Dorsolateral prefrontal cortex (tissue), 120 donors: ENCODE measurements at regions of chr1 and their contacts with region 1.

Region 1: DNA sequence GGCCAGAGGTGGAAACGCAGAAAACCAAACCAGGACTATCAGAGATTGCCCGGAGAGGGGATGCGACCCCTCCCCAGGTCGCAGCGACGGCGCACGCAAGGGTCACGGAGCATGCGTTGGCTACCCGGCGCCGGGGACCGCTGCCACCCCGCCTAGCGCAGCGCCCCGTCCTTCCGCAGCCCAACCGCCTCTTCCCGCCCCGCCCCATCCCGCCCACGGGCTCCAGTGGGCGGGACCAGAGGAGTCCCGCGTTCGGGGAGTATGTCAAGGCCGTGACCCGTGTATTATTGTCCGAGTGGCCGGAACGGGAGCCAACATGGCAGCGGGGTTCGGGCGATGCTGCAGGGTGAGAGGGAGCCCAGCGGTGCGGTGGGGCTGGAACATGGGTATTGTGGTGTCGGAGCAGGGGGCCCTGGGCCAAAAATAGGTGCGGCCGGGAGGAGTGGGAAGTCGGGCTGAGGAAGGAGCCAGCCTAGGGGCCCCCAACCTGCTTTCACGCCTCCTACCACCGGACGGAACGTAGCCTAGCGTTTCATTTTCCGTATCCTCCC is at the start of gene ACADM:
- DNase-seq: peak; percentile 76 to 93 (median 86)
- H3K4me3 ChIP-seq: peak within 1 kb of the TSS; percentile 58 to 97 (median 86)
- H3K27ac ChIP-seq: peak within 1 kb of the TSS; percentile 24 to 97 (median 92)
- H3K27me3 ChIP-seq: no peaks in the 10 kb centered on the region
- CTCF ChIP-seq: peak in 9 of 56 donors; percentile 5 to 35 (median 13)
- total RNA-seq, gene ACADM: 41.2 to 86.9 (median 60.5) TPM

Region 2: DNA sequence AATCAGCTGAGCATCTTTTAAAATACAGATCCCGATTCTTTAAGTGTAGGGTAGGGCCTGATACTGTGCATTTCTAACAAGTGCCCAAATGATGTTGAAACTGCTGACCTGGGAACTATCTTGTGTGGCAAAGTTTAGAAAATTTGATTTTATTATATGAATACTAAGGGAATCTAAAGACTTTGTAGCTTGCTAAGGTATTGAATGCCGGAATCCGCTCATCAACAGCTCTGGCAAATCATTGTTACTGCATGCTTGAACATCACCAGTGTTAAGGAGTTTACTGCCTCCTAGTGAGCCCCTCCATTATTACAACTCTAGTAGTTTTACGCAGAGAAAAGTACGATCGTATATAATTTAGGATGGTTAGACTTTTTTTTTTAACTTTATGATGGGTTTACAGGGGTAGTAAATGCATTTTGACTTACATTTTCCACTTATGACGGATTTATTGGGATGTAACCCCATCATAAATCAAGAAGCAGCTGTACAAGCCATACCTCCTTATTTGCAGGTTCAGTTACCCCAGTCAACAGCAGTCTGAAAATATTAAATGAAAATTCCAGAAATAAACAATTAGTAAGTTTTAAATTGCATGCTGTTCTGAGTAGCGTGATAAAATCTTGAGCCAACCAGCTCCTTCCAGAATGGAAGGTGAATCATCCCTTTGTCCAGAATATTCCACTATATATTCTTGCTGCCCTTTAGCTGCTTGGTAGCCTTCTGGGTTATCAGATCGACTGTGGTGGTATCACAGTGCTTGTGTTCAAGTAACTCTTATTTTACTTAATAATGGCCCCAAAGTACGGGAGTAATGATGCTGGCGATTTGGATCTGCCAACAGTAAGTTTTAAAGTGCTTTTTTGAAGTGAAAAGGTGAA is 990.7 kb before region 1 on chr1:
- intact Hi-C with region 1: loop called in 1 of 2 experiments (anchors 10 kb)
- DNase-seq: peak in 3 of 10 donors; percentile 9 to 48 (median 36)
- H3K4me3 ChIP-seq: peak overlapping the region; percentile 52 to 93 (median 80)
- H3K27ac ChIP-seq: peak overlapping the region; percentile 54 to 97 (median 91)
- H3K27me3 ChIP-seq: no peaks in the 10 kb centered on the region
- CTCF ChIP-seq: peak; percentile 53 to 85 (median 73)

Region 3: DNA sequence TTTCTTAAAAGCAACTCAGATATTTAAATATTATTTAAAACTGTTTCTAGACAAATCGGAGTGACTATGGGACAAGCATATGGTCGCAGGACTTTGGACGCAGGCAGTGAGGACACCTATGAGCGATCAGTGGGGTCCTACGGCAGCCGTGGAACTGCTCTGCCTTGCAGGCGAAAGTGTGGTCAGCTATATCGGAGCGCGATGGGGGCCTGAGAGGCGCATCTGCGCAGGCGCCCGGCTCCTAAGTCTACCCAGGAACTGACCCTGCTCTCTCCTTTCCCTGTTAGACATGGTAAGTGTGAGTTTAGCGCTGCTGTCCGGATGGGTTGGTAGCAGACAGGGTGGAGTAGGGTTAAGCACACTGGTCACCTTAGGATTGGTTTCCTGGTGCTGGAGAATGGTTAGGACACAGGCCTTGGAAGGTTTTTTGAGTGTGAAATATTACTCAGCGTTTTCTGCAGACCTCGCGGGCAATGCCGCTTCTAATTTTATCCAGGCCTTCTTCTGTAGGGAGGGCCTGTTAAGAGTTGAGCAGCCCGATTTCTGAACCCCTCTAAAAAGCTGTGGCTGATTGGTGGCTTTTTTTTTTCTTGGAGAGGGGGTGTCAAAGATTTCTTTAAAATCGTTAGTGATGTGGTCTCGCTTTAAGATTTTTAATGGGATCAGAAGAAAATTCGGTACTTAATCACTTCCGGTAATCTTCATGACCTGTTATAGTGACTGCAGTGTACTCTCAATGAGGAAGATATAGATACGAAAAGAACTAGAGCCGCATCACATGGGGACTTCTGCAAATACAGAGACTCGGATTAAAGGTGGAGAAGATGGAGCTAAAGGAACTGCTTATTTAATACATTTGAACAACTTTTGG is 61.7 kb after region 1 on chr1 and contains the start of gene RABGGTB:
- intact Hi-C with region 1: loop called (anchors 1 to 5 kb)
- DNase-seq: peak; percentile 92 to 98 (median 96)
- H3K4me3 ChIP-seq: peak within 1 kb of the TSS; percentile 52 to 96 (median 82)
- H3K27ac ChIP-seq: peak within 1 kb of the TSS; percentile 26 to 95 (median 87)
- H3K27me3 ChIP-seq: no peaks in the 10 kb centered on the region
- CTCF ChIP-seq: peak in 28 of 56 donors; percentile 7 to 46 (median 22)
- total RNA-seq, gene RABGGTB: 41.2 to 78.9 (median 61.5) TPM

Region 4: GRCh38 chr1:77313491-77313890 is 1588.9 kb after region 1 on chr1:
- intact Hi-C with region 1: no loop called
- DNase-seq: no peak
- H3K4me3 ChIP-seq: no peak overlapping the region
- H3K27ac ChIP-seq: peak overlapping the region in 22 of 59 donors; percentile 2 to 75 (median 38)
- H3K27me3 ChIP-seq: no peaks in the 10 kb centered on the region
- CTCF ChIP-seq: peak in 22 of 56 donors; percentile 10 to 42 (median 22)